ENCODE measurements at regions of chr10 and their contacts with region 1.

Region 1: GRCh38 chr10:50431791-50432190 is 180.5 kb upstream of the ASAH2 start:
- DNase-seq: no peak
- ATAC-seq: peak; percentile 73
- H3K4me3 Mint-ChIP-seq: peak overlapping the region; percentile 30
- H3K27ac Mint-ChIP-seq: peak overlapping the region; percentile 64
- H3K4me1 Mint-ChIP-seq: peaks cover 22% of the 10 kb centered on the region
- H3K27me3 Mint-ChIP-seq: no peaks in the 10 kb centered on the region

Region 2: GRCh38 chr10:50421026-50421719 is 10.6 kb before region 1 on chr10:
- CTCF ChIA-PET with region 1: interaction called, 13 read pairs
- POLR2A ChIA-PET with region 1: interaction called, 3 read pairs
- DNase-seq: peak; percentile 64
- ATAC-seq: peak; percentile 30
- H3K4me3 Mint-ChIP-seq: no peak overlapping the region
- H3K27ac Mint-ChIP-seq: peak overlapping the region; percentile 50
- H3K4me1 Mint-ChIP-seq: peaks cover 38% of the 10 kb centered on the region
- H3K27me3 Mint-ChIP-seq: no peaks in the 10 kb centered on the region

Region 3: DNA sequence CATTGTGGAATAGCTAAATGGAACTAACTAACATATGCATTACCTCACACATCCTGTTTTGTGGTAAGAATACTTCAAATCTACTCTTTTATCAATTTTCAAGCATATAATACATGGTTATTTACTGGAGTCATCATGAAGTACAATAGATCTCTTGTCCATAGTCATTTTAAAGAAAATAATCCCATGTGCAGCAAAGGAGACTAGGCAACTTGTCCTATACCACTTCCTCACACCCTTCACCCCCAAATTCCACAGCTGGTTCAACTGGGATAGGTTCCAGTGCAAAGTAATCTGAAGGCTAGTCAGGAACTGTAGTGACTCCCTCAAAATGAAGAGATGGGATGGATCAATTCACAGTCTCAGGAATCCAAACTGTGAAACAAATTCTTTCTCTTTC is 15.9 kb after region 1 on chr10:
- CTCF ChIA-PET with region 1: no interaction called
- POLR2A ChIA-PET with region 1: no interaction called
- DNase-seq: no peak
- ATAC-seq: no peak
- H3K4me3 Mint-ChIP-seq: no peak overlapping the region
- H3K27ac Mint-ChIP-seq: no peak overlapping the region
- H3K4me1 Mint-ChIP-seq: peaks cover 9% of the 10 kb centered on the region
- H3K27me3 Mint-ChIP-seq: no peaks in the 10 kb centered on the region

Measured in activated CD8-positive, alpha-beta T cell treated with anti-CD3 and anti-CD28 coated beads, Interleukin-2, amount 10 ng/mL, durations not matched to agents 7 days and 5 days (primary cell).